Posterior cingulate gyrus (tissue), 11 donors: ENCODE measurements at regions of chr4 and their contacts with region 1.

Region 1: DNA sequence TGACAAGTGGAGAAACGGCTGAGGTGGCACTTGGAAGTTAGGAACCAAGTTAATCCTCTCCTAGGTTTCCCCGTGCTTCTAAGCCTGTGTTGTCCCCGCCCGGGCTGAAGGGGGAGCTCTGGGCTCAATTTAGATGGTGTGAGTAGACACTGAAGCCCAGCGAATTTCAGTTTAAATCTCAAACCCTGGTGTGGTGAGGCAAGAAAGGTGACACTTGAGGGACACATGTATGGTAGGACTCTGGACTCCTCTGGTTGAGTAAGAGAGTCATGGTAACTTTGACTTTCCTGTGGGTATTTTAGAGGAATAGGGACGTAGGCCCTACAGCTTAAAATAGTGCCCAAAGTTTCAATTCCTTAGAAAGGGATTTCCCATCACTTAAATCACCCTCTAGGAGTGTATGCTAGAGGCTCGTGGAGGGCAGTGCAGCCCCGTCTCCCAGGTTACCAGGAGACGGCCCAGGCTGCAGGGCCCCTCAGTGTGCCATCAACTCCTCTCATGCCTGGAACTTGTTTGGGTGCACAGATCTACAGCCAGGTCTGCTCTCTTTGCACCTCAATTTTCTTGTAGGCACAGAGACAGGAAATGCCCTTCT is 24.0 kb downstream of the HAND2 start:
- DNase-seq: peak in 3 of 10 donors; percentile 30 to 89 (median 40)

Region 2: GRCh38 chr4:173398779-173399415 is 107.1 kb before region 1 on chr4 and contains the start of gene SCRG1:
- intact Hi-C with region 1: no loop called
- DNase-seq: peak in 9 of 10 donors; percentile 32 to 93 (median 58)

Region 3: DNA sequence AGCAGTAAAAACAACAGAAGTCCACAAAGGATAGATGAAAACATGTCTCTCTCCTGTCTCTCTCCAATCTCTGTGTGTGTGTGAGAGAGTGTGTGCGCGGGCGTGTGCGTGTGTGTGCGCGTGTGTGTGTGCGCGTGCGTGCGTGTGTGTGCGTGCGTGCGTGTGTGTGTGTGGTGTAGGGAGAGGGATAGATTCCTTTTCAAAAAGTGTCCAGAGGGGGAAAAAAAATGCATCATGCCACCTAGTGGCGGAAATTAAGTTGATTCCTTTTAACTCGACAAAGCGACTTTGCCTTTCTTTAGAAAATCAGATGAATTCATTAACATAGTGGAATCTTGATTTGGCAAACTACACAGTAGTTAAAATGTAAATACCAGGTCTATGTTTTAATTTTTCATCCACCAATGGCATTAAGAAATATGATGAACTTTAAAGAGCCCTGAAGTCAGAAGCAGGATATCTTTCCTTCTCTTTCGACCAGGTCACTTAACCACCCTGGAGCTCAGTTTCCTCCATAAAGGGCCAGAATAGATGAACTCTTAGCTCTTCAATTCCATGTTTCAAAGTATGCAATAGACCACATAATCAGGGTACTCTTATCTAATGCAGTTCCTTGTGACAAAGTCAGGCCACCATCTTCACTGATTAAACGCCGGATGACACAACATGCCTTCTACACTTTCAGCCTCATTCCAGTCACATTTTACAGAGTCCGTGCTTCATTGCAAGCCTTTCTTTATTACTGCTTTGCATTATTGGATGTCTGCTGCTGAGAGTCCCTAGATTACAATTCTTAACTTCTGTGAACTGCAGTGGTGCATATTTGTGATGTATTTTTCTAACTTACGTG is 614.6 kb after region 1 on chr4:
- intact Hi-C with region 1: loop called (anchors 1 kb)
- DNase-seq: peak in 7 of 10 donors; percentile 15 to 86 (median 34)

Region 4: GRCh38 chr4:174156239-174156826 is 650.3 kb after region 1 on chr4:
- intact Hi-C with region 1: loop called (anchors 10 kb)
- DNase-seq: no peak